Left ventricle myocardium inferior (tissue), 1 donor: ENCODE measurements at regions of chr22 and their contacts with region 1.

Region 1: DNA sequence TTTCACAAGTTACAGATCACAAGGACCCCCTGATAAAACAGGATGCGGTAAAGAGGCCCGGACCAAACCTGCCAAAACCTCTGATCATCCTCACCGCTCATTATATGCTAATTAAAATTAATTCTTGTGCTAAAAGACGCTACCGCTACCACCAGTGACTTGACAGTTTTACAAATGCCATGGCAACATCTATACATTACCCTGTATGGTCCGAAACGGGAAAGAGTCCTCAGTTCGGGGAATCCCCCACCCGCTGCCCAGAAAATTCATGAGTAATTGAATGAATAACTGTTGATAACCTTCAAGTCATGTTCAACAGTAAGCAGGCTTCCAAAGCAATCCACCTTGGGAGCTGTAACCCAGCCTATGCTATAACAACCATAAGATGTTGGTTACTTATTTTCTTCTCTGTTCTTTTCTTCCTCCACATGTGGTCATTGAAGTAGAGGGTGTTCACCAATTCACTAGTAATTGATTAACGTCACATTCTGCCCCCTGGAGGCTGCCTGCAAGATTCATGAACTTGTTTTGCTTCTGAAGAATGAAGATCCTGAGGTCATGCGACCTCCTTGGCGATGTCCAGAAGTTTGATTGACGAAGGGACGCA is 20.6 kb downstream of the APOBEC3H start:
- DNase-seq: no peak
- H3K4me3 ChIP-seq: no peak overlapping the region
- H3K27ac ChIP-seq: no peak overlapping the region
- H3K4me1 ChIP-seq: peaks cover 2% of the 10 kb centered on the region
- H3K27me3 ChIP-seq: peaks cover 46% of the 10 kb centered on the region
- CTCF ChIP-seq: peak; percentile 54

Region 2: GRCh38 chr22:38777087-38777671 is 340.5 kb before region 1 on chr22:
- intact Hi-C with region 1: loop called (anchors 10 kb)
- DNase-seq: no peak
- H3K4me3 ChIP-seq: no peak overlapping the region
- H3K27ac ChIP-seq: no peak overlapping the region
- H3K4me1 ChIP-seq: peaks cover 24% of the 10 kb centered on the region
- H3K27me3 ChIP-seq: no peaks in the 10 kb centered on the region
- CTCF ChIP-seq: no peak

Region 3: GRCh38 chr22:38850941-38851849 is 266.5 kb before region 1 on chr22:
- intact Hi-C with region 1: no loop called
- DNase-seq: no peak
- H3K4me3 ChIP-seq: no peak overlapping the region
- H3K27ac ChIP-seq: no peak overlapping the region
- H3K4me1 ChIP-seq: no peaks in the 10 kb centered on the region
- H3K27me3 ChIP-seq: peaks cover 13% of the 10 kb centered on the region
- CTCF ChIP-seq: no peak

Region 4: DNA sequence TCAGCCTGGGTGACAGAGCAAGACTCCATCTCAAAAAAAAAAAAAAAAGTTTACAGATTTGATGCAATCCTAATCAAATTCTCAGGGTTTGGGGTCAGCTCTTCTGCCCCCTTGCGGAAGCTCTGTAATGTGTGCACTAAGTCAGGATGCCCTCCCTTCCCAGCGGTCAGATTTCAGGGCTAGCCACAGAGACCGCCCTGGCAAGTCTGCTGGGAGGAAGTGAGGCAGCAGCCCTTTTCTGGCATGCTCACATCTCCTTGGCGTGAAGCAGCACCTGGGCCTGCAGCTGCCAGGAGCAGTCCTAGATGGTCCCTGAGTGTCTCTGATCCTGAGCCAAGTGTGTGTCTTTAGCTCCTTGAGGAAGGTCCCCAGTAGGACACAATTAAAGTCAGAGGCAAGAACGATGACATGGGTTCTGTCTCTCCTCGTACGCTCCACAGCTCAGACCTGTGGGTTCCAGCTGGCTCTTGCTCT is 114.5 kb before region 1 on chr22:
- intact Hi-C with region 1: loop called (anchors 10 kb)
- DNase-seq: peak; percentile 61
- H3K4me3 ChIP-seq: no peak overlapping the region
- H3K27ac ChIP-seq: no peak overlapping the region
- H3K4me1 ChIP-seq: peaks cover 3% of the 10 kb centered on the region
- H3K27me3 ChIP-seq: peaks cover 7% of the 10 kb centered on the region
- CTCF ChIP-seq: peak; percentile 83

Region 5: DNA sequence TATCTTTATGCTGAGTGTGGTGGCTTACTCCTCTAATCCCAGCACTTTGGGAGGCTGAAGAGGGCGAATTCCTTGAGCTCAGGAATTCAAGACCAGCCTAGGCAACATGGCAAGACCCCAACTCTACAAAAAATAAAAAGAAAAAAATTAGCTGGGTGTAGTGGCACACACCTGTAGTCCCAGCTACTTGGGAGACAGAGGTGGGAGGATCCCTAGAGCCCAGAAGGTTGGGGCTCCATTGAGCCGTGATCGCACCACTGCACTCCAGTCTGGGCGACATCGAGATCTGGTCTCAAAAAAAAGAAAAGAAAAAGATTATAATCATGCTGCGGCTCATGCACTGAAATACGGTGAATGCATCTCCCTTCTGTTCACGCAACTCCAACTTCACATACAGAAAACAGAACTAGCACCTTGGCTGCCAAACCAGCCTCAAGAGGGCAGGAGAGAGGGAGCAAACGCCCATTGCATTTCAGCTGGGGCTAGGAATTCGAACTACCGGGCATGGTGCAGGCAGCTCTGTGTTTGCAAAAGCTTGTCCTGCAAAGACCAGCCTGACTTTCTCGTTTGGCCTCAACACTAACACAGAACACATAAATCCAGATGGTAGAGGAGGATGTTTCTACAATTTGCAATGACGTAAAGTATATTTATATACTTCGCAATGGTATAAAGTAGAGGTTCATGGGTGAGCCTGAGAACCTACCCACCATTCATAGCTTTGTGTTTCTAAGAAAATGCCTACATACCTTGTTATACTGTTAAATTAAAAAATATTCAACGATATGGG is 225.8 kb after region 1 on chr22:
- intact Hi-C with region 1: no loop called
- DNase-seq: peak; percentile 41
- H3K4me3 ChIP-seq: no peak overlapping the region
- H3K27ac ChIP-seq: no peak overlapping the region
- H3K4me1 ChIP-seq: peaks cover 5% of the 10 kb centered on the region
- H3K27me3 ChIP-seq: peaks cover 10% of the 10 kb centered on the region
- CTCF ChIP-seq: peak; percentile 79